ENCODE measurements at regions of chr13 and their contacts with region 1.

Region 1: DNA sequence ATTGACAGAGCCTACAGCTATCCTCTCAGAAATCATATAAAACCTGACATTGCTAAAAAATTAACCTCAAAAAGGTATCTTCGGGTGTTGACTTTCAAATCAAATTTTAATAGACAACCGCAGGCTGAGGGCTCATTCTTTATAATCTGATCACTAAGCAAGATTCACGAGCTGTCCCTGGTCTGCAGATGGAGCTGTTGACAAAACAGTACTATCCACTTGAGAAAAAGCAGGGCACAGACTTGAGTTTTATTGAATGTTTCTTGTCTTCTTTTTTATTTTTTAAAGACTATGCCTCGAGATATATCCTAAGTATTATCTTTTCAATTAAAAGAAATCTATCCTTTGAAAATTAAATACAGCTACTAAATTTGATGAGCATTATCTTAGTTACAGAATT is 540.5 kb downstream of the PCDH9 start:
- DNase-seq: peak; percentile 76
- H3K4me3 ChIP-seq: no peak overlapping the region
- H3K27ac ChIP-seq: peak overlapping the region; percentile 28
- H3K4me1 ChIP-seq: peaks cover 18% of the 10 kb centered on the region
- CTCF ChIP-seq: peak; percentile 77

Region 2: GRCh38 chr13:65926750-65927171 is 762.9 kb before region 1 on chr13:
- CTCF ChIA-PET with region 1: no interaction called
- POLR2A ChIA-PET with region 1: no interaction called
- intact Hi-C with region 1: loop called (anchors 2 kb)
- DNase-seq: peak; percentile 31
- H3K4me3 ChIP-seq: no peak overlapping the region
- H3K27ac ChIP-seq: no peak overlapping the region
- H3K4me1 ChIP-seq: no peaks in the 10 kb centered on the region
- CTCF ChIP-seq: peak; percentile 56

Region 3: DNA sequence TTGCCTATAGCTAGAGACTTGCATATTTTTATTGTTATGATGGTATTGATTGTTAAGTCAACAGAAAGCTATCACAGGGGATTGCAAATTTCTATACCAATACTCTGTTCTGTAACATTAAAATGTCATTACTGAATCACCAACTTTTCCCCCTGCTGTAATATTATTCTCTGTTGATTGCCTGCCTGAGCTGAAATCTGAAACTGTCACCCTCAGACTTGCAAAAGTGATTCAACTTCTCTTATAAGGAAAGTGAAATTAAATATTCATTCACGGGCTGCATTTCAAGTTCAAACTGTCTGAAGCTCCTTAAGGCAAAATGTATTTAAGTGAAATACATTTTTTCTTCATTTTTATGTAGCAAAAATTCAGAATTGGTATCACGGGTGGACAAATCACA is 182.6 kb before region 1 on chr13:
- CTCF ChIA-PET with region 1: no interaction called
- POLR2A ChIA-PET with region 1: no interaction called
- intact Hi-C with region 1: no loop called
- DNase-seq: no peak
- H3K4me3 ChIP-seq: no peak overlapping the region
- H3K27ac ChIP-seq: no peak overlapping the region
- H3K4me1 ChIP-seq: no peaks in the 10 kb centered on the region
- CTCF ChIP-seq: no peak

Region 4: DNA sequence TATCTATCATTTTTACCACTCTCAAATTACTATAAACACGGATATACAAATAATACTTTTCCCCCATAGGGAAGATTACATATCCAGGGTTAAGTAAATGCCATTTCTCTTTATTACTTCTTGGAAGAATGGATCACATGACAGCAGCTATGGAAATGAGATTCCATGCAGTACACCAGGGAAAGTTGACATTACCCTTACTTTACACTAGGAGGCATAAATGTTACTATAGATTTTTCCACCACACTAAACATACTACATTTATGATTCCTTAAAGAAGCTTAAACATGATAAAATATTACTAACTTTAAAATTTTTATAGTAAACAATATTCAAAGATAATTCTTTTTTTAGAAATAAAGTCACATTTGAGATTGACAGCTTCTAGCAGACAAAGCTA is 70.9 kb before region 1 on chr13:
- CTCF ChIA-PET with region 1: no interaction called
- POLR2A ChIA-PET with region 1: no interaction called
- intact Hi-C with region 1: loop called (anchors 1 kb)
- DNase-seq: peak; percentile 34
- H3K4me3 ChIP-seq: no peak overlapping the region
- H3K27ac ChIP-seq: no peak overlapping the region
- H3K4me1 ChIP-seq: no peaks in the 10 kb centered on the region
- CTCF ChIP-seq: peak; percentile 71

Region 5: GRCh38 chr13:66842766-66843165 is 153.1 kb after region 1 on chr13:
- CTCF ChIA-PET with region 1: no interaction called
- POLR2A ChIA-PET with region 1: no interaction called
- intact Hi-C with region 1: no loop called
- DNase-seq: no peak
- H3K4me3 ChIP-seq: no peak overlapping the region
- H3K27ac ChIP-seq: no peak overlapping the region
- H3K4me1 ChIP-seq: no peaks in the 10 kb centered on the region
- CTCF ChIP-seq: no peak

Region 6: DNA sequence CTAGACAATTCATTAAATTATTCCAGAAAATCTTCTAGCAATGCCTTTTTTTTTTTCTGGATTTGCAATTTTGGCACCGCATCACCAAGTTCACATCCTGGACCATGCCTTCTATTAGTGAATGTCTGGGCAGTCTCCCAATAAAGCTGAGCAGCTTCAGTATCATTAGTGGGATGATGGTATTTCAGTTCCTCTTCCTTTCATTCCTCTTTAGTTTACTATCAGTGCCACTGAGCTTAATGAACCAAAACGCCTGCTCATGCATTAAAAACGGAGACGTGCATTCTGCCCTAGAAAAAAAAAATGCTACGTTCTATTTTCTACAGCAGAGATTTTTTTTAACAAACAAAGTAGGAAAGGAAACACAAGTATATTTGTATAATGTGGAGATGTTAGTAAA is 197.5 kb after region 1 on chr13:
- CTCF ChIA-PET with region 1: no interaction called
- POLR2A ChIA-PET with region 1: interaction called, 16 read pairs
- intact Hi-C with region 1: loop called (anchors 5 kb)
- DNase-seq: peak; percentile 89
- H3K4me3 ChIP-seq: peak overlapping the region; percentile 50
- H3K27ac ChIP-seq: peak overlapping the region; percentile 99
- H3K4me1 ChIP-seq: peaks cover 67% of the 10 kb centered on the region
- CTCF ChIP-seq: no peak

Region 7: GRCh38 chr13:67224148-67224846 is 534.7 kb after region 1 on chr13:
- CTCF ChIA-PET with region 1: no interaction called
- POLR2A ChIA-PET with region 1: interaction called, 8 read pairs
- intact Hi-C with region 1: loop called (anchors 1 kb)
- DNase-seq: peak; percentile 86
- H3K4me3 ChIP-seq: peak overlapping the region; percentile 62
- H3K27ac ChIP-seq: peak overlapping the region; percentile 48
- H3K4me1 ChIP-seq: peaks cover 56% of the 10 kb centered on the region
- CTCF ChIP-seq: peak; percentile 87